ENCODE measurements at regions of chr10 and their contacts with region 1.

Region 1: GRCh38 chr10:13348216-13349017 is at the start of gene SEPHS1:
- DNase-seq: no peak
- ATAC-seq: peak; percentile 78
- H3K4me3 ChIP-seq: peak within 1 kb of the TSS; percentile 81
- H3K27ac ChIP-seq: peak within 1 kb of the TSS; percentile 77
- H3K4me1 ChIP-seq: peaks cover 20% of the 10 kb centered on the region
- H3K27me3 ChIP-seq: no peaks in the 10 kb centered on the region
- CTCF ChIP-seq: peak in 1 of 3 experiments; percentile 11; a peak in 1 of 6 replicates
- EP300 ChIP-seq: no peak
- POLR2A ChIP-seq: peak; percentile 77
- RAD21 ChIP-seq: no peak
- polyA plus RNA-seq, gene SEPHS1: 14.7 to 20.8 TPM

Region 2: DNA sequence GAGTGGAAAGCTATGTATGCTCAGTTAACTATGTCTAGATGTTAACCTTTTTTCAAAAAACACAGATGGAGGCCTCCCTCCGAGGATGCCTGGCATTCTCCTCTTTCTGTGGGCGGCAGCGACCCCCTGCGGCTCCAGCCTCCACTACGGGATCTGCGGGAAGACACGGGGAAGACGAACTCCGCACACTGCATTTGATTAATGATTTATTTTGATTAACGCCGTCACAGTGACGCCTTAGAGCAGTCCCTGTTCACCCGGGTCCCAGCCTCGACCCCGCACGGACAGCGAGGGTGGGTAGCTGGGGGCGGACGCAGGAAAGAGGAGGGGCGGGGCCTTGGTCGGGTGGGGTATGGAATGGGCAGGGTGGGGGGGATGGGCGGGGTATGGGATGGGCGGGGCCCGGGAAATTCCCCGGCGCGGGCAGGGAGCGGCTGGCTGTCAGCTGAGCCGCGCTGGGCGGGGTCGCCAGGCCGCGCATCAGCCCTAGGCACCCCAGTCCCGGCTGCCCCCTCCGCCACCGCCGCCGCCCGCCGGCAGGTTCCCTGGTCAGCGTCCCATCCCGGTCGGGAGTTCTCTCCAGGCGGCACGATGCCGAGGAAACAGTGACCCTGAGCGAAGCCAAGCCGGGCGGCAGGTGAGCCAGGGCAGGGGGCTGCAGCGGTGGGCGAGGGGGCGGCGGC is 248.6 kb before region 1 on chr10 and contains the start of gene OPTN:
- CTCF ChIA-PET with region 1: interaction called, 4 read pairs
- POLR2A ChIA-PET with region 1: no interaction called
- RAD21 ChIA-PET with region 1: no interaction called
- SMC1A ChIA-PET with region 1: interaction called, 3 read pairs
- in situ Hi-C with region 1: no loop called
- intact Hi-C with region 1: loop called (anchors 5 kb)
- DNase-seq: peak; percentile 54
- ATAC-seq: peak; percentile 85
- H3K4me3 ChIP-seq: peak within 1 kb of the TSS; percentile 98
- H3K27ac ChIP-seq: peak within 1 kb of the TSS; percentile 46
- H3K4me1 ChIP-seq: peaks cover 8% of the 10 kb centered on the region
- H3K27me3 ChIP-seq: no peaks in the 10 kb centered on the region
- CTCF ChIP-seq: peak; percentile 73 to 88 (median 77)
- EP300 ChIP-seq: no peak
- POLR2A ChIP-seq: peak; percentile 84
- RAD21 ChIP-seq: peak; percentile 52
- polyA plus RNA-seq, gene OPTN: 15.2 to 22.3 TPM

Region 3: DNA sequence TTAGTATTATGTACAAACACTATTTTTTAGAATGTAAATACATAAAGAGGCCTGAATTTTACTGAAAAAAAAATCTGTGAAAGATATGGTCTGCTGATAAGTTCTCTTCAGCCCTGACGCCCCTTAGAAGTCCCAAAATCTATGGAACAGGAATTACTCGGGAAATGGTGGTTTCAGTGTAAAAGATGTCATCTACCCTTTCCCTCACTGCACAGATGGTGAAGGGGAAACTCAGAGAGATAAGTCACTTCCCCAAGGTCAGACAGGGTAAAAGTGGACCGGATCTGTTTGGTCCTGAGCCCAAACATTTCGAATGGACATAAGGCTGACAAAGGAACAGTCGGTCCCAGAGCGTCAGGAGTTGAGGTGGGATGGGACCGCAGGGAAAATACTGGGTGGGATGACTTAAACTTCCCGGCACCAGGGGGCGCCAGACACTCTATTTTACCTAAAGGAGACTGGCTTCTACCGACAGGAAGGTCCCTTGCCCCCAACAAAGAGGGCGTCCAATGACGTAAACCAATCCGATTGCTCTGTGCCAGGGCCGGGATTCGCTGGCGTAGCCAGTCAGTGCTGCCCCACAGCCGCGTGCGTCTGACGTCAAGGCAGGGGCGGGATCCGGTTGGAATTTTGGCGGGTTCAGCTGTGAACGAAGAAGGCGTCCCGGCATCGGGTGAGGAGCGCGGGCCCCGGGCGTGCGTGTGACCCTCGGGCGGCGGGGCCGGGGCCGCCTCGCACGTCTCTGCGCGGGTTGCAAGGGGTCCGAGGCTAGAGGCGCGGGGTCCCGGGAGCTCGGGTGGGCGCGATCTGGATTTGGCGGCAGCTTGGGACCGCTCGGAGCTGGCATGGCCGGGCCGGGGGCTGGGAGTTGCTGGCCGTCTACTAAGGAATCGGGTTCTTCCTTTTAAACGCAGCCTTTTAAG is 187.2 kb before region 1 on chr10 and contains the start of gene MCM10:
- CTCF ChIA-PET with region 1: interaction called, 5 read pairs
- POLR2A ChIA-PET with region 1: no interaction called
- RAD21 ChIA-PET with region 1: interaction called, 3 read pairs
- SMC1A ChIA-PET with region 1: interaction called, 5 read pairs
- in situ Hi-C with region 1: no loop called
- intact Hi-C with region 1: loop called (anchors 1 kb)
- DNase-seq: peak; percentile 96
- ATAC-seq: peak; percentile 99
- H3K4me3 ChIP-seq: peak within 1 kb of the TSS; percentile 81
- H3K27ac ChIP-seq: peak within 1 kb of the TSS; percentile 41
- H3K4me1 ChIP-seq: peaks cover 7% of the 10 kb centered on the region
- H3K27me3 ChIP-seq: no peaks in the 10 kb centered on the region
- CTCF ChIP-seq: peak; percentile 73 to 93 (median 79)
- EP300 ChIP-seq: no peak
- POLR2A ChIP-seq: peak; percentile 73
- RAD21 ChIP-seq: peak; percentile 67
- polyA plus RNA-seq, gene MCM10: 5.8 to 6.8 TPM

Region 4: DNA sequence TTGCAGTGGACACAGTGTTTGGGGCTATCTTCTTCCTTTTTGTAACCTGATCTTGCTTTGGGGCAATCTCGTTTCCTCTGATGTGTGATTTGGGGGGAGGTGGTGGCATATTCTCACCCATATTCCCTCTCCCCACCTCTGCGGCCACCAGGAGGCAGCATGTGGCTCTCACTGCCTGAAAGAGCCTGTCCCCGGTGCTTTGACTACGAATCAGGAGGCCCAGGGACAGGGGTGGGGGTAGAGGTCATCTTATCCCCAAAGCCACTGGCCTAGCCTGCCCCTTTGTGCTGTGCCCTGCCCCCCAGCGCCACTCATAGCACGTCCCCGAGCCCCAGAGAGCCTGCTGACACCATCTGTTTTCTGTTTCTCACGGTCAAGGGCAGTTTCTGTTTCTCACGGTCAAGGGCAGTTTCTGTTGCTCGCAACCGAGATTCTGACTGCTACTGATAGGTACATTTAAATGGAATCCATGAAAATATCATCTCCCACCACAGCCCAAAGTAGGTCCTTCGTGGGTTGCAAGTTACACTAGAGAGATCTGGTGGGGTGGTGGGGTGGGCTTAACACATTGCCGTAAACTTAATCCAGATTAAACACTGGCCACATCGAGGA is 76.8 kb before region 1 on chr10:
- CTCF ChIA-PET with region 1: no interaction called
- POLR2A ChIA-PET with region 1: no interaction called
- RAD21 ChIA-PET with region 1: no interaction called
- SMC1A ChIA-PET with region 1: no interaction called
- in situ Hi-C with region 1: no loop called
- intact Hi-C with region 1: loop called (anchors 1 kb)
- DNase-seq: no peak
- ATAC-seq: peak; percentile 97
- H3K4me3 ChIP-seq: no peak overlapping the region
- H3K27ac ChIP-seq: no peak overlapping the region
- H3K4me1 ChIP-seq: peaks cover 4% of the 10 kb centered on the region; the same call in 1 of the 2 replicates
- H3K27me3 ChIP-seq: no peaks in the 10 kb centered on the region
- CTCF ChIP-seq: peak; percentile 55 to 72 (median 62)
- EP300 ChIP-seq: no peak
- POLR2A ChIP-seq: no peak
- RAD21 ChIP-seq: peak; percentile 66

Region 5: GRCh38 chr10:13317474-13317873 is 30.9 kb before region 1 on chr10:
- CTCF ChIA-PET with region 1: no interaction called
- POLR2A ChIA-PET with region 1: no interaction called
- RAD21 ChIA-PET with region 1: no interaction called
- SMC1A ChIA-PET with region 1: no interaction called
- in situ Hi-C with region 1: no loop called
- intact Hi-C with region 1: no loop called
- DNase-seq: no peak
- ATAC-seq: no peak
- H3K4me3 ChIP-seq: no peak overlapping the region
- H3K27ac ChIP-seq: no peak overlapping the region
- H3K4me1 ChIP-seq: no peaks in the 10 kb centered on the region
- H3K27me3 ChIP-seq: no peaks in the 10 kb centered on the region
- CTCF ChIP-seq: no peak
- EP300 ChIP-seq: no peak
- POLR2A ChIP-seq: no peak
- RAD21 ChIP-seq: no peak

Region 6: DNA sequence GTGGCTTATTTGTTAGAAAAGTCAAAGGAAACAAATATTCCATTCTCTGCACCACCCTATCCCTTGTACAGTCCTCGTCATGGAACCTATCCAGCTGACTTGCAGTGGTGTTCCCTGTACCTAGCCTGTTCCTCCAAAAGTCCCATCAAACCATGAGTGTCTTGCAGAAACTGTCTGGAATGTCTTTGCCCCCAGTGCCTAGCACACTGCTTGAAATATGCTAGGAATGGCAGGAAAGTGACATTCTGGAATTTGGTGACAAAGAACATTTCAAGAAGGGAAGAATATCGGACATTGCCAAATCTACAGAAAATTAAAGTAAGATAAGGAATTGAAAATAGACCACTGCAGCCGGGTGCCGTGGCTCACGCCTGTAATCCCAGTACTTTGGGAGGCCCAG is 10.6 kb after region 1 on chr10:
- CTCF ChIA-PET with region 1: no interaction called
- POLR2A ChIA-PET with region 1: no interaction called
- RAD21 ChIA-PET with region 1: no interaction called
- SMC1A ChIA-PET with region 1: no interaction called
- in situ Hi-C with region 1: no loop called
- intact Hi-C with region 1: no loop called
- DNase-seq: no peak
- ATAC-seq: no peak
- H3K4me3 ChIP-seq: no peak overlapping the region
- H3K27ac ChIP-seq: no peak overlapping the region
- H3K4me1 ChIP-seq: no peaks in the 10 kb centered on the region
- H3K27me3 ChIP-seq: no peaks in the 10 kb centered on the region; a peak in 1 of 4 replicates
- CTCF ChIP-seq: no peak
- EP300 ChIP-seq: no peak
- POLR2A ChIP-seq: no peak
- RAD21 ChIP-seq: no peak

Region 7: DNA sequence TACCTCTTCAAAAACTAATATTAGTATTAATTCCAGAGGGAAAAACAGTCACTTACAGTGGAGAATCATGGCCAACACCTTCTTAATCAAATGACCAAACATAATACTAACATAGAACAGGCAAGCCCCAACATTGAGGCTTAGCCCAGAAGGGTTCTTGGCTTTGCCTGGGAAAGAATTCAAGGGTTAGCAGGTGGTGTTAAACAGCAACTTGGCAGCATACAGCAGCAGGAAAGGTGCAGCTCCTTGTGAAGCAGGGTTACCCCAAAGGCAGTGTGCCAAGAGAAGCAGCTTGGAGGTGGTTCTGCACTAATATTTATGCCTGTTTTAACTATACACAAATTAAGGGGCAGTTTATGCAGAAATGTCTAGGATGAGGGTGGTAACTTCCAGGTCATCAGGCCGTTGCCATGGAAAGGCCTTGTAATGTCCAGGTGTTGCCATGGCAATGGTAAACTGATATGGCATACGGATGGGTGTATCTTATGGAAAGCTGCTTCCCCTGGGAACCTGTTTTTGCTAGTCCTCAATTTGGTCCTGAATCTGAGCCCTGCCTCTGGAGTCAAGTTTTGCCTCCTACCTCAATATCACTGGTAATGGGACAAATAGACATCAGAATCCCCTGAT is 207.6 kb after region 1 on chr10:
- CTCF ChIA-PET with region 1: no interaction called
- POLR2A ChIA-PET with region 1: no interaction called
- RAD21 ChIA-PET with region 1: no interaction called
- SMC1A ChIA-PET with region 1: no interaction called
- in situ Hi-C with region 1: no loop called
- intact Hi-C with region 1: no loop called
- DNase-seq: no peak
- ATAC-seq: no peak
- H3K4me3 ChIP-seq: no peak overlapping the region
- H3K27ac ChIP-seq: no peak overlapping the region
- H3K4me1 ChIP-seq: no peaks in the 10 kb centered on the region
- H3K27me3 ChIP-seq: no peaks in the 10 kb centered on the region
- CTCF ChIP-seq: no peak
- EP300 ChIP-seq: no peak
- POLR2A ChIP-seq: no peak
- RAD21 ChIP-seq: no peak